Panc1 (cell line): ENCODE measurements at regions of chr16 and their contacts with region 1.

Region 1: GRCh38 chr16:66414891-66415290 is 12.2 kb upstream of the BEAN1 start:
- DNase-seq: no peak
- ATAC-seq: no peak
- H3K4me3 ChIP-seq: no peak overlapping the region
- H3K27ac ChIP-seq: no peak overlapping the region
- H3K4me1 ChIP-seq: no peaks in the 10 kb centered on the region
- H3K27me3 ChIP-seq: no peaks in the 10 kb centered on the region
- CTCF ChIP-seq: no peak

Region 2: DNA sequence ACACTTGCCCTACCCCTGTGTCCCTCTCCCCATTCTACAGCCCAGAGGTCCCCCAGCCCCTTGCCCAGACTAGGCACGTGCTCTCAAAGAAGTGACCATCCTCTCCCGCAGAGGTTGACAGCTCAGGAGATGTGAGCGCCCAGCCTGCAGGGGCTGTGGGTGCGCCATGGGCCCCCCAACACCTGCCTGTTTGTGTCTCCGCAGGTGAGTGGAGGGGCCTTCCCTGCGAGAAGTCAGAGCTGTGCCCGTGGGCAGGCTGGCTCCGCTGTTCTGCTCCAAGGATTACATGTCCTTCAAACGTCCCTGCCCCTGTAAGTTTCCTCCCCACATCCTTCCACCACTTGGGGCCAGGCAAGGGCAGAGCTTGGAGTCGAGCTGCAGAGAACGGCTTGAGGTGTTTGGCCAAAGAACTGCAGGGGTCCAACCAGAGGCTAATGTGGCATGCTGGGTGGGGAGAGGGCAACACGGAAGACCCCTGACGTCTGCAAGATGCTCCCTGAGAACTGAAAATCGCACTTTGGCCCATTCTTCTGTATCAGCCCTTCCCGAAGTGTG is 22.6 kb after region 1 on chr16:
- CTCF ChIA-PET with region 1: no interaction called
- POLR2A ChIA-PET with region 1: interaction called, 18 read pairs
- in situ Hi-C with region 1: no loop called
- intact Hi-C with region 1: no loop called
- DNase-seq: no peak
- ATAC-seq: no peak
- H3K4me3 ChIP-seq: no peak overlapping the region
- H3K27ac ChIP-seq: no peak overlapping the region
- H3K4me1 ChIP-seq: no peaks in the 10 kb centered on the region
- H3K27me3 ChIP-seq: no peaks in the 10 kb centered on the region
- CTCF ChIP-seq: no peak

Region 3: GRCh38 chr16:66751303-66751991 is 336.6 kb after region 1 on chr16 and contains the start of gene DYNC1LI2:
- CTCF ChIA-PET with region 1: no interaction called
- POLR2A ChIA-PET with region 1: no interaction called
- in situ Hi-C with region 1: no loop called
- intact Hi-C with region 1: no loop called
- DNase-seq: no peak
- ATAC-seq: peak; percentile 96
- H3K4me3 ChIP-seq: peak within 1 kb of the TSS; percentile 79 to 94
- H3K27ac ChIP-seq: peak within 1 kb of the TSS; percentile 74
- H3K4me1 ChIP-seq: peaks cover 11% of the 10 kb centered on the region
- H3K27me3 ChIP-seq: no peaks in the 10 kb centered on the region
- CTCF ChIP-seq: peak; percentile 96
- total RNA-seq, gene DYNC1LI2: 103 TPM